Activated naive CD4-positive, alpha-beta T cell treated with anti-CD3 and anti-CD28 coated beads for 36 hours (primary cell): ENCODE measurements at regions of chr5 and their contacts with region 1.

Region 1: DNA sequence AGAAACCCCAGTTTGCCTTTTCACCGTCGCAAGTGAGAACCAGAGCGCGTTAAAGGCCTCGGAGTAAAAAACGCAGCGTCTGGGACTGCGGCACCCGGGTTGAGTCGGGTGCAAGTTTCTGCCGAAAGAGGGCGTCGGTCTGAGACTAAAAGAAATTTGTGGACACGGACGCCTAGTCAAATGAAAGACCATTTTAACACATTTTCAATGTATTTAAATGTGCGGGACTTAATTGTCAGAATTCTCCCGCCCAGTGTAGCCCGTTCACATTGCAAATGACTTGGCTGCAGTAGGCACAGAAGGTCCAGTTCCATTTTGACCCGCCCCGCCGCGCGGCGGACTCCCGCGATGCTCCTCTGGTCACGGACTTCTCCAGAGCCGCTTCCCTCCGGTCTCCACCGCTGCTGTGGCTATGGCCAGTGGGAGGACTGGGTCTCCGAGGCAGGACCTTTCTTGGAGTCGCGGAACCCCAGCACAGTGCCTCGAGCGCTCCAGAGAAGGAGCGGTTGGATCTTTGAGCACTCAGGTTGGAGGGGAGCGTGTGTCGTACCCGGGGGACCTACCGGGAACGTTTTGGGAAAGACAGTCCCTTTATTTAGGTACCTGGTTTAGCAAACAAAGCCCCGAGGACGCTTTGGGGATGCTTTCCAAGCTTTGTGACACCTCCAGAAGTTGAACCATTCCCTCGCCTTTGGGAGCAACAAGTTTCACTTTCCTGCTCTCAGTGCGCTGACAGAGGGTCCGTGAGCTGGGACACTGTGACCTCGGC is 1.2 kb upstream of the NPR3 start:
- DNase-seq: peak; percentile 75
- H3K4me3 Mint-ChIP-seq: peak overlapping the region; percentile 65
- H3K27ac Mint-ChIP-seq: no peak overlapping the region
- H3K4me1 Mint-ChIP-seq: peaks cover 26% of the 10 kb centered on the region
- H3K27me3 Mint-ChIP-seq: peaks cover 62% of the 10 kb centered on the region

Region 2: GRCh38 chr5:32651638-32652037 is 58.3 kb before region 1 on chr5:
- CTCF ChIA-PET with region 1: no interaction called
- intact Hi-C with region 1: no loop called
- DNase-seq: no peak
- H3K4me3 Mint-ChIP-seq: no peak overlapping the region
- H3K27ac Mint-ChIP-seq: no peak overlapping the region
- H3K4me1 Mint-ChIP-seq: no peaks in the 10 kb centered on the region
- H3K27me3 Mint-ChIP-seq: peaks cover 5% of the 10 kb centered on the region

Region 3: DNA sequence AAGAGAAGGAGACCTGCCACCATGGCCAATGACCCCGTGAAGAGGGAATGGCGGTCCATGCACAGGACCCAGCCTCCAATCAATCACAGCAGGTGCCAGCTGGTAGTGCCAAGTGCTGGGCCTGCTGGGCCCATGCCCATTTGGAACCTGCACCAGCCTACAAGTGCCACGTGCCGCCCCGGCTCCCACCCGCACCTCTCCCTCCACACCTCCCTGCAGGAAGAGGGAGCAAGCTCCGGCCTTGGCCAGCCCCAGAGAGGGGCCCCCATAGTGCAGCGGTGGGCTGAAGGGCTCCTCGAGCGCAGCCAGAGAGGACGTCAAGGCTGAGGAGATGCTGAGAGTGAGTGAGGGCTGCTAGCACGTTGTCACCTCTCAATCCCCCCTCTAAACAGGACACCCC is 36.7 kb before region 1 on chr5:
- CTCF ChIA-PET with region 1: no interaction called
- intact Hi-C with region 1: no loop called
- DNase-seq: no peak
- H3K4me3 Mint-ChIP-seq: no peak overlapping the region
- H3K27ac Mint-ChIP-seq: no peak overlapping the region
- H3K4me1 Mint-ChIP-seq: no peaks in the 10 kb centered on the region
- H3K27me3 Mint-ChIP-seq: no peaks in the 10 kb centered on the region

Region 4: DNA sequence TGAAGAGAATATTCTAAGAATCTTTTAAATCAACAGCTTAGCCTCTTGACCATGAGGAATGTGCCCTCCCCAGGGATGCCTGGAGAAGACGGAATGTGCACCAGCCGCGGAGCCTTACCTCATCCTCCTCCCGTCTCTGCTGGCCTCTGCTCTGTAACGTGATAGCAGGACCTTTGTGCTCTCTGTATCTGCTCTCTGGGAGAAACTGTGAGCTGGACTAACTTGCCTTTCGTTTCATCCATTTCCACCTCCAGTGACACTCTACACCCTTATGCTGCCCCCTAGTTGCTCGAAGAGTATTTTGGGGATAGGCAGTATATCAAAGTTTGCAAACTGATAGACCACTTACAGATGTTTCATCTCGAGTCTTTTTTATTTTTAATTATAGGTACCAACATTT is 142.6 kb after region 1 on chr5:
- CTCF ChIA-PET with region 1: interaction called, 3 read pairs
- intact Hi-C with region 1: loop called (anchors 5 kb)
- DNase-seq: no peak
- H3K4me3 Mint-ChIP-seq: no peak overlapping the region
- H3K27ac Mint-ChIP-seq: no peak overlapping the region
- H3K4me1 Mint-ChIP-seq: no peaks in the 10 kb centered on the region
- H3K27me3 Mint-ChIP-seq: no peaks in the 10 kb centered on the region

Region 5: DNA sequence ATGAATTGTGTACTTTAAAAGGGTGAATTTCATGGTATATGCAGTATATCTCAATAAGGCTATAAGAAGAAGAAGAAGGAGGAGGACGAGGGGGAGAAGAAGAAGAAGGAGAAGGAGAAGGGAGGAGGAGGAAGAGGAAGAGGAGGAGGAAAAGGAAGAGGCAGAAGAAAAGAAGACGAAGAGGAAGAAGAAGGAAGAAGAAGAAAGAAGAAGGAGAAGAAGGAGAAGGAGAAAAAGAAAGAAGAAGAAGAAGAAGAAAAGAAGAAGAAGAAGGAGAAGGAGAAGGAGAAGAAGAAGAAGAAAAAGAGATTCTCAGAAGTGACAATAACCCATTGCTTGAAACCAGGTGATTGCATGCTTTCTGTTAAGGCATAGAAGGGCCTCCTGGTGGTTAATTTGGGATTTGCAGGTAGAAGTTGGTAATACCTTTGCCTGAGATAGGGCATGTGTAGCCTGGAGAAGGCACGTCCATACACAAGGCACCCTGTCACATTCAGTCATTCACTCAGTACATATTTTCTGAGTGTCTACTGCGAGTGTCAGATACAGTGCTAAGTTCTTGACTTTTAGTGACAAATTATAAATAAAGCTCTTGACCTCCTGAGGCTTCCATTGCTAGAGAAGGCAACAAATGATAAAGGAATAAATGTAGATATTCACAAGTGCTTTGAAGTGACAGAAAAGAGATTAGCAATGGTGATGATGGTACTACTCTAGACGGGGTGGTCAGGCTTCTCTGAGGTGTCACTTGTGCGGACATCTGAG is 232.4 kb after region 1 on chr5:
- CTCF ChIA-PET with region 1: no interaction called
- intact Hi-C with region 1: loop called (anchors 1 kb)
- DNase-seq: peak; percentile 22
- H3K4me3 Mint-ChIP-seq: no peak overlapping the region
- H3K27ac Mint-ChIP-seq: no peak overlapping the region
- H3K4me1 Mint-ChIP-seq: no peaks in the 10 kb centered on the region
- H3K27me3 Mint-ChIP-seq: no peaks in the 10 kb centered on the region

Region 6: GRCh38 chr5:33379757-33380156 is 669.8 kb after region 1 on chr5:
- CTCF ChIA-PET with region 1: no interaction called
- intact Hi-C with region 1: loop called (anchors 5 kb)
- DNase-seq: peak; percentile 5
- H3K4me3 Mint-ChIP-seq: no peak overlapping the region
- H3K27ac Mint-ChIP-seq: no peak overlapping the region
- H3K4me1 Mint-ChIP-seq: no peaks in the 10 kb centered on the region
- H3K27me3 Mint-ChIP-seq: peaks cover 13% of the 10 kb centered on the region

Region 7: DNA sequence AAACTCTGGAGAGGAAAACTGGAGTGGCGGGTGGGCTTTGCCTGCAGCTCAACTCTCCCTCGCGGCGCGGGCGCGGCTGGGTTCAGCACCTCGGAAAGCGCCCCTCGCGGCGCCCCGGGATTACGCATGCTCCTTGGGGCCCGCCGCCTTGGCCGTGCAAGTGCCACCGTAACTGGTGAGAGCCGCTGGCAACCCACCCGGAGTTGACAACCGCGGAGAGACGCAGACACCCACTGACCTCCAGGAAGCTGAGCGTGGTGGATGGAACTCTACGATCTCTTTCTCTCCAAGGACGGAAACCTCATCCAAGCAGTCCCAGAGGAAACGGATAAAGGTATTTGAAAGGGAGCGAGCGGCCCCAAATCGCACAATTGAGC is 1226.0 kb after region 1 on chr5:
- CTCF ChIA-PET with region 1: no interaction called
- intact Hi-C with region 1: loop called (anchors 5 kb)
- DNase-seq: peak; percentile 58
- H3K4me3 Mint-ChIP-seq: no peak overlapping the region
- H3K27ac Mint-ChIP-seq: no peak overlapping the region
- H3K4me1 Mint-ChIP-seq: peaks cover 8% of the 10 kb centered on the region
- H3K27me3 Mint-ChIP-seq: peaks cover 46% of the 10 kb centered on the region